ENCODE measurements at regions of chr5 and their contacts with region 1.

Region 1: GRCh38 chr5:139341650-139342422 is at the start of gene PAIP2:
- DNase-seq: peak; percentile 89 to 100 (median 92)
- ATAC-seq: peak; percentile 88
- H3K4me3 ChIP-seq: peak within 1 kb of the TSS; percentile 86
- H3K27ac ChIP-seq: peak within 1 kb of the TSS; percentile 100
- H3K4me1 ChIP-seq: peaks cover 11 to 13% of the 10 kb centered on the region in 2 experiments; a peak in 4 of 5 replicates
- H3K27me3 ChIP-seq: no peaks in the 10 kb centered on the region
- CTCF ChIP-seq: peak; percentile 88 to 97 (median 97)
- EP300 ChIP-seq: no peak; the same call in 1 of the 2 replicates
- POLR2A ChIP-seq: peak; percentile 97
- RAD21 ChIP-seq: peak; percentile 36 to 55
- polyA plus RNA-seq, gene PAIP2: 152 to 180 TPM

Region 2: GRCh38 chr5:139273572-139274289 is 68.1 kb before region 1 on chr5:
- CTCF ChIA-PET with region 1: no interaction called
- POLR2A ChIA-PET with region 1: interaction called, 3 read pairs
- in situ Hi-C with region 1: no loop called
- intact Hi-C with region 1: loop called (anchors 5 kb)
- DNase-seq: peak; percentile 94 to 98 (median 98)
- ATAC-seq: peak; percentile 92
- H3K4me3 ChIP-seq: peak overlapping the region; percentile 72
- H3K27ac ChIP-seq: peak overlapping the region; percentile 92
- H3K4me1 ChIP-seq: peaks cover 12 to 56% of the 10 kb centered on the region in 2 experiments
- H3K27me3 ChIP-seq: no peaks in the 10 kb centered on the region
- CTCF ChIP-seq: peak; percentile 6 to 30 (median 13); a peak in 2 of 6 replicates
- EP300 ChIP-seq: peak; percentile 58; the same call in 1 of the 2 replicates
- POLR2A ChIP-seq: peak; percentile 97
- RAD21 ChIP-seq: no peak

Region 3: GRCh38 chr5:139293504-139294373 is 48.1 kb before region 1 on chr5 and contains the start of gene MATR3:
- CTCF ChIA-PET with region 1: no interaction called
- POLR2A ChIA-PET with region 1: interaction called, 21 read pairs
- in situ Hi-C with region 1: no loop called
- intact Hi-C with region 1: loop called (anchors 2 kb)
- DNase-seq: peak; percentile 93 to 97 (median 94)
- ATAC-seq: peak; percentile 86
- H3K4me3 ChIP-seq: peak within 1 kb of the TSS; percentile 88
- H3K27ac ChIP-seq: peak within 1 kb of the TSS; percentile 99
- H3K4me1 ChIP-seq: peaks cover 17 to 27% of the 10 kb centered on the region in 2 experiments; a peak in 4 of 5 replicates
- H3K27me3 ChIP-seq: no peaks in the 10 kb centered on the region
- CTCF ChIP-seq: no peak
- EP300 ChIP-seq: no peak; the same call in 1 of the 2 replicates
- POLR2A ChIP-seq: peak; percentile 98
- RAD21 ChIP-seq: no peak
- polyA plus RNA-seq, gene MATR3: 150 to 299 TPM

Region 4: GRCh38 chr5:139358064-139358463 is 16.2 kb after region 1 on chr5:
- CTCF ChIA-PET with region 1: no interaction called
- POLR2A ChIA-PET with region 1: interaction called, 17 read pairs
- in situ Hi-C with region 1: no loop called
- intact Hi-C with region 1: no loop called
- DNase-seq: no peak
- ATAC-seq: no peak
- H3K4me3 ChIP-seq: no peak overlapping the region
- H3K27ac ChIP-seq: no peak overlapping the region
- H3K4me1 ChIP-seq: no peaks in the 10 kb centered on the region
- H3K27me3 ChIP-seq: no peaks in the 10 kb centered on the region
- CTCF ChIP-seq: no peak
- EP300 ChIP-seq: no peak
- POLR2A ChIP-seq: no peak
- RAD21 ChIP-seq: no peak

Region 5: GRCh38 chr5:139403787-139404483 is 62.1 kb after region 1 on chr5 and contains the start of gene SPATA24:
- CTCF ChIA-PET with region 1: no interaction called
- POLR2A ChIA-PET with region 1: interaction called, 7 read pairs
- in situ Hi-C with region 1: no loop called
- intact Hi-C with region 1: loop called (anchors 5 kb)
- DNase-seq: peak; percentile 98 to 99 (median 99)
- ATAC-seq: peak; percentile 98
- H3K4me3 ChIP-seq: peak within 1 kb of the TSS; percentile 50
- H3K27ac ChIP-seq: peak within 1 kb of the TSS; percentile 90
- H3K4me1 ChIP-seq: peaks cover 11 to 15% of the 10 kb centered on the region in 2 experiments; a peak in 4 of 5 replicates
- H3K27me3 ChIP-seq: no peaks in the 10 kb centered on the region
- CTCF ChIP-seq: no peak
- EP300 ChIP-seq: no peak
- POLR2A ChIP-seq: peak; percentile 70
- RAD21 ChIP-seq: no peak
- polyA plus RNA-seq, gene SPATA24: 4.1 to 4.6 TPM